ENCODE measurements at regions of chr5 and their contacts with region 1.

Region 1: GRCh38 chr5:138503487-138504270 is 38.4 kb downstream of the EGR1 start:
- DNase-seq: peak; percentile 59
- H3K4me3 Mint-ChIP-seq: no peak overlapping the region
- H3K27ac Mint-ChIP-seq: no peak overlapping the region
- H3K4me1 Mint-ChIP-seq: no peaks in the 10 kb centered on the region
- H3K27me3 Mint-ChIP-seq: no peaks in the 10 kb centered on the region
- CTCF ChIP-seq: peak; percentile 68

Region 2: GRCh38 chr5:138287246-138287645 is 216.4 kb before region 1 on chr5:
- CTCF ChIA-PET with region 1: no interaction called
- intact Hi-C with region 1: no loop called
- DNase-seq: no peak
- H3K4me3 Mint-ChIP-seq: no peak overlapping the region
- H3K27ac Mint-ChIP-seq: no peak overlapping the region
- H3K4me1 Mint-ChIP-seq: no peaks in the 10 kb centered on the region
- H3K27me3 Mint-ChIP-seq: no peaks in the 10 kb centered on the region
- CTCF ChIP-seq: no peak

Region 3: GRCh38 chr5:138449501-138450239 is 54.0 kb before region 1 on chr5:
- CTCF ChIA-PET with region 1: interaction called, 46 read pairs
- intact Hi-C with region 1: loop called (anchors 1 kb)
- DNase-seq: peak; percentile 95
- H3K4me3 Mint-ChIP-seq: no peak overlapping the region
- H3K27ac Mint-ChIP-seq: no peak overlapping the region
- H3K4me1 Mint-ChIP-seq: no peaks in the 10 kb centered on the region
- H3K27me3 Mint-ChIP-seq: peaks cover 30% of the 10 kb centered on the region
- CTCF ChIP-seq: peak; percentile 98

Region 4: GRCh38 chr5:138464008-138464387 is 39.7 kb before region 1 on chr5:
- CTCF ChIA-PET with region 1: interaction called, 35 read pairs
- intact Hi-C with region 1: loop called (anchors 5 kb)
- DNase-seq: peak; percentile 99
- H3K4me3 Mint-ChIP-seq: peak overlapping the region; percentile 78
- H3K27ac Mint-ChIP-seq: peak overlapping the region; percentile 94
- H3K4me1 Mint-ChIP-seq: peaks cover 22% of the 10 kb centered on the region
- H3K27me3 Mint-ChIP-seq: peaks cover 32% of the 10 kb centered on the region
- CTCF ChIP-seq: peak; percentile 96

Region 5: GRCh38 chr5:138542956-138543729 is 39.5 kb after region 1 on chr5 and contains the start of gene ETF1:
- CTCF ChIA-PET with region 1: no interaction called
- intact Hi-C with region 1: loop called (anchors 1 kb)
- DNase-seq: peak; percentile 100
- H3K4me3 Mint-ChIP-seq: peak within 1 kb of the TSS; percentile 80
- H3K27ac Mint-ChIP-seq: peak within 1 kb of the TSS; percentile 88
- H3K4me1 Mint-ChIP-seq: peaks cover 51% of the 10 kb centered on the region
- H3K27me3 Mint-ChIP-seq: no peaks in the 10 kb centered on the region
- CTCF ChIP-seq: no peak
- total RNA-seq, gene ETF1: 159 and 164 TPM in 2 replicates

Measured in Calu3 (cell line).